GM23248 (cell line): ENCODE measurements at regions of chr3 and their contacts with region 1.

Region 1: GRCh38 chr3:28286595-28286994 is 45.2 kb downstream of the CMC1 start:
- DNase-seq: peak; percentile 68
- H3K4me3 ChIP-seq: no peak overlapping the region
- H3K27ac ChIP-seq: no peak overlapping the region
- H3K4me1 ChIP-seq: no peaks in the 10 kb centered on the region
- H3K27me3 ChIP-seq: no peaks in the 10 kb centered on the region

Region 2: DNA sequence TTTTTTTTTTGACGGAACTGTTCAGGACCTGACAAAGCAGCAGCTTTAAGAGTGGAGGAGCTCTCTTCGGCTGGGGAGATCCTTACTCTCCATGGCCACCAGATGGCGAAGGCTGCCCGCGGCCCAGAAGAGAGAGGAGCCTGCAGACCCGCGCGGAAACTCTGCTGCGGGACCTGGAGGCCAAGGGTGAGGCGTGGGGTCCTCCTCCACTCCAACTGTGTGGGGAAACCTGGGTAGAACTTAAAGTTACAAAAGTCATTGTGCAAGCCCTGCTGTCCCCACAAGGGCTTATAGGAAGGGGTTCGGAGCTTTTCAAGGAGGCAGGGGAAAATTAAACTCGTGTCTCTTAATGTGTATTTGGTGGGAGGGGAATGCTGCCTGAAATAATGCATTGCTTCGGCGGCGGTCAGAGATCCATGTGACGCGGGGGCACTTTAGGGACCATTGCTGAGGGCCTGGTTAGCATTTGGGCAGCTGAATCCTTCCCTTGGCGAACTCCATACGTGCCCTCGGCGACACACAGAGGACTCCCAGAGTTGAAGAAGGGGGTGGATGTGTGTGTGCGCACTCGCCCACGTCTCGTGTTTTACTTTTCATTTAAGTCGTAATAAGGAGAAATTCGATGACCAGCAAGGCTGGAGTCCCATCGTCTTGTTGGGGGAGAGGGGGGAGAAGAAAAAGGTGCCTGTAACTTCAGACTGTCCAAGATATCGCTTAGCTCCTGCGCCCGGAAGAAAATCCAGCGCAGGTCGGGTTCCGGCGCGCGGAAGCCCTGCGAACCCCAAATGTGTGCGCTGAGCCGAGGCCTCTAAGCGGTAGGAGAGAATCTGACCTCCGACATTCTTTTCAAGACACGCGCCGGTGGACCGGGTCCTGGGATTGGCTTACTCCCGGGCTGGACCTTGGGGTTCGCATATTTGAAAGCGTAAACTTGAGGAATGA is 574.2 kb before region 1 on chr3:
- in situ Hi-C with region 1: loop called (anchors 25 kb)
- DNase-seq: peak; percentile 92
- H3K4me3 ChIP-seq: peak overlapping the region; percentile 76
- H3K27ac ChIP-seq: no peak overlapping the region
- H3K4me1 ChIP-seq: no peaks in the 10 kb centered on the region
- H3K27me3 ChIP-seq: peaks cover 26% of the 10 kb centered on the region

Region 3: GRCh38 chr3:28081533-28081947 is 205.1 kb before region 1 on chr3:
- in situ Hi-C with region 1: no loop called
- DNase-seq: no peak
- H3K4me3 ChIP-seq: no peak overlapping the region
- H3K27ac ChIP-seq: no peak overlapping the region
- H3K4me1 ChIP-seq: no peaks in the 10 kb centered on the region
- H3K27me3 ChIP-seq: no peaks in the 10 kb centered on the region